ENCODE measurements at regions of chr11 and their contacts with region 1.

Region 1: DNA sequence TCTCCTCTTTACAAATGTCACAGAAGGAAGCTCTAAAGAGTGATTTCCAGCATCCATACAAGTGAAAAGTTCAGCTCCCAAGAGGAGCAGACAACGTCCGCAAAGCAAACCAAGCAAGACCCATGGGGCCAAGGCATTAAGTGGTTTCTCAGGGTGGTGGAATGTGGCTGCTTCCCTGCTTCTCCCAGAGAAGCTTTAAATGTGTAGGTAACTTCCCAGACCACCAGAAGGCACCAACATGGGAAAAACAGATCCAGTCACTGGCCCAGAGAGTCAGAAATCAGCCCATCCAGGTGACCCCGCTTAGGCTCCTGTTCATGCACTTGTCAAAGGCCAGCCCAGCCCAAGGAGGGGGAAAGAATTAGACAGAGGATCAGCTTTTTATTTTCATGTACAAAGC is 13.3 kb upstream of the PHF21A start:
- DNase-seq: no peak
- H3K4me3 ChIP-seq: no peak overlapping the region
- CTCF ChIP-seq: no peak

Region 2: DNA sequence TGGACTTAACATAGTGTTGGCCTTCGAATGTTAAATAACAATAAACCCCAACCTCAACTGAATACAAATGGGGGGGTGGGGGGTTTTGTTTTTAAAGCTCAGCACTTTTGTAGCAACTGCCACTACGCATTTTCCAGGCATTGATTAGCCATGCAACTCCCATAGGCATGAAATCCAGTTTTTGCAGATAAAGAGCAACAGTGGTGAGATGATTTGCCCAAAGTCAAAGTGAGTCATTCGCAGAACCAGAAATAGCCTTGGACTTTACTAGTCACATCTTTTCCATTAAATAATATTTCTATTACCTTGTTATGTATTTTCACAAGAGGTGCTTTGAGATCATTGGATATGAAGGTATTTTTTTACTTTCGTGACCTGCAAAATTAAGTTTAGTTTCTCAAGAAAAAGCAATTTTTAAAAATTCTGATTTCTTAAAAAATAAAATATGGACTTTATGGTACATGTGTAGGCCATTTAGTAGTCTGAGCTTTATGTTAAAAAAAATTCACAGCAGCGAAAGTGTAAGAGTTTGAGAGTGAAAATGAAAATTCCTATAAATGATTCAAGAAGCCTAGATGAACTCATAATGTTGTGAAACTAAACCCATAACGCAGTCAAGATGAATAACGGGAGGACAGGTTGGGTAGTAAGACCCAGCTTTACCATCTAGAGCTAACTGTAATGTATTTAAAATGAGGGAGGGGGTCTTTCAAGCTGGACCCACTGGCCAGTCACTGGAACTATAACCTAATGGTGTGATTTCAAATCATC is 11.4 kb before region 1 on chr11:
- CTCF ChIA-PET with region 1: interaction called, 11 read pairs
- POLR2A ChIA-PET with region 1: interaction called, 3 read pairs
- DNase-seq: no peak
- H3K4me3 ChIP-seq: 0 out of 2 replicates have a peak overlapping the region, but pooled peaks have one; percentile 64
- CTCF ChIP-seq: no peak

Region 3: GRCh38 chr11:46445920-46446771 is 311.6 kb after region 1 on chr11:
- CTCF ChIA-PET with region 1: no interaction called
- POLR2A ChIA-PET with region 1: no interaction called
- DNase-seq: peak; percentile 28
- H3K4me3 ChIP-seq: no peak overlapping the region
- CTCF ChIP-seq: peak; percentile 37